Esophagus muscularis mucosa (tissue), 4 donors: ENCODE measurements at regions of chr3 and their contacts with region 1.

Region 1: DNA sequence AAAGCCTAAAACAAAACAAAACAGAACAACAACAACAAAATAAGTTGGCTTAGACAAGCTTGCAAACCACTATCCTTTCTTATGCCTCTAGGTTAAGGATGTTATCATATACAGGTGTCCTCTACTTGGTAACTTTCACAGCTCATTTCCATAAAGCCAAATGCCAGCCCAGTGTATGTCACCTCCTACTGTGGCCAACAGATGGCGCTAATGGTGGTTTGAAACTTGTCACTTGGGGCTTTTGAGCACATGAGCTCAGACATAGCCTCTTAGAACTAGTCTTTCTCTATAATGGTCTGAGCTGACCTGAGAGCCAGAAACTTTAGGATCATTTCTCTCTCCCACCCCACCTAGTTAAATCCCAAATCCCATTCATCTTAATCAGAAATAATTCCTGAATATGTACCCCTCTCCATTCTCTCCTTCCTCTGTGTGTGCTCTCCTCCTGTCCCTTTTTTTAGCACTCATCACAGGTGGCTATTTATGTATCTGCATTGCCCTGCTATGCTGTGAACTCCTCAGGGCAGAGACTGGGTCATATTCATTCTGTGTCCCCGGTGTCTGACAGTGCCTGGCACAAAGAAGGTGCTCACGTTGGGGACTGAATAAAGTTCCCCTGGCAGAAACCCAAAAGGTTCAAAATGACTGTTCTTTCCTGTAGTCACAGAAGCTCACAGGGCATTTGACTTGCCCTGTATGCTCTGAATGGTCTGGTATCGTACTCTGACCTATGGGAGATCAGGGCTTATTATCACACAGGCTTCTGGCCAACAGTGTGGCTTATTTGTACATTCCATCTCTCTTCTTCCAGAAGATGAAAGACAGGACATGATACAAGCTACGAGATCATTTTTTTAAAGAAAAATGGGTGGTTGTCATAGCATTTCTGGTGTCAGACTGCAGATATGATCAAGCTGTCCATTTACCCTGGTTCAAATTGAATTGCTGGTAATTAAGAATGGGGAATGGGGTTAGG is 319.3 kb upstream of the AZI2 start:
- DNase-seq: no peak
- H3K4me3 ChIP-seq: no peak overlapping the region
- H3K27ac ChIP-seq: no peak overlapping the region
- H3K4me1 ChIP-seq: peaks cover 4 to 10% (median 7%) of the 10 kb centered on the region in 4 donors
- H3K27me3 ChIP-seq: no peaks in the 10 kb centered on the region
- CTCF ChIP-seq: peak; percentile 66 to 86 (median 76)
- EP300 ChIP-seq: no peak
- POLR2A ChIP-seq: no peak

Region 2: DNA sequence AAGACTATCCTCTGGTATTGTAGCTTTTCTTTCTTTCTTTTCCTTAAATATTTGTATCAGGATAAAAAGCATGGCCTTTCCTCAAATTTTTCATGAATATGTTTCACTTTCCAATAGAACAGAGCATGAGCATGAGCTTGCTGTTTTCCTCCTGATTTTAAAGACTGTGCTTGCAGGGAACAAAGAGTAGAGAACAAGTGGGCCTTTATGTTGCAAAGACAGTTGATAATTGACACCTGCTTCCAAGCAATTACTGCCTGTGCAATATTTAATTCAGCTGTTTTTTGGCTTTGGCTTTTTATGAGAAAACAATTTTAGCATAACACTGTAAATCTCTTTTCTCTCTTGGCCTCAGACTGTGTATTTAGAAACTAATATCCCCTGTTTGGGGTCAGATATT is 55.7 kb before region 1 on chr3:
- intact Hi-C with region 1: no loop called
- DNase-seq: no peak
- H3K4me3 ChIP-seq: no peak overlapping the region
- H3K27ac ChIP-seq: no peak overlapping the region
- H3K4me1 ChIP-seq: peaks cover 0 to 6% (median 0%) of the 10 kb centered on the region in 4 donors
- H3K27me3 ChIP-seq: no peaks in the 10 kb centered on the region
- CTCF ChIP-seq: no peak
- EP300 ChIP-seq: no peak
- POLR2A ChIP-seq: no peak

Region 3: GRCh38 chr3:29764603-29765254 is 1096.8 kb after region 1 on chr3:
- intact Hi-C with region 1: loop called (anchors 5 kb)
- DNase-seq: no peak
- H3K4me3 ChIP-seq: no peak overlapping the region
- H3K27ac ChIP-seq: no peak overlapping the region
- H3K4me1 ChIP-seq: peaks cover 14 to 39% (median 33%) of the 10 kb centered on the region in 4 donors
- H3K27me3 ChIP-seq: no peaks in the 10 kb centered on the region
- CTCF ChIP-seq: peak; percentile 64 to 78 (median 71)
- EP300 ChIP-seq: no peak
- POLR2A ChIP-seq: no peak